ENCODE measurements at regions of chr20 and their contacts with region 1.

Region 1: GRCh38 chr20:51639206-51639832 is 96.8 kb upstream of the NFATC2 start:
- DNase-seq: peak; percentile 63 to 71
- ATAC-seq: peak; percentile 63 to 89 (median 87)
- H3K4me3 ChIP-seq: no peak overlapping the region
- H3K4me3 Mint-ChIP-seq: no peak overlapping the region
- H3K27ac ChIP-seq: no peak overlapping the region
- H3K27ac Mint-ChIP-seq: peak overlapping the region in 1 of 2 donors; percentile 55
- H3K4me1 ChIP-seq: peaks cover 6% of the 10 kb centered on the region
- H3K4me1 Mint-ChIP-seq: peaks cover 6 to 8% of the 10 kb centered on the region in 2 donors
- H3K27me3 ChIP-seq: no peaks in the 10 kb centered on the region
- H3K27me3 Mint-ChIP-seq: no peaks in the 10 kb centered on the region
- CTCF ChIP-seq: peak; percentile 90

Region 2: DNA sequence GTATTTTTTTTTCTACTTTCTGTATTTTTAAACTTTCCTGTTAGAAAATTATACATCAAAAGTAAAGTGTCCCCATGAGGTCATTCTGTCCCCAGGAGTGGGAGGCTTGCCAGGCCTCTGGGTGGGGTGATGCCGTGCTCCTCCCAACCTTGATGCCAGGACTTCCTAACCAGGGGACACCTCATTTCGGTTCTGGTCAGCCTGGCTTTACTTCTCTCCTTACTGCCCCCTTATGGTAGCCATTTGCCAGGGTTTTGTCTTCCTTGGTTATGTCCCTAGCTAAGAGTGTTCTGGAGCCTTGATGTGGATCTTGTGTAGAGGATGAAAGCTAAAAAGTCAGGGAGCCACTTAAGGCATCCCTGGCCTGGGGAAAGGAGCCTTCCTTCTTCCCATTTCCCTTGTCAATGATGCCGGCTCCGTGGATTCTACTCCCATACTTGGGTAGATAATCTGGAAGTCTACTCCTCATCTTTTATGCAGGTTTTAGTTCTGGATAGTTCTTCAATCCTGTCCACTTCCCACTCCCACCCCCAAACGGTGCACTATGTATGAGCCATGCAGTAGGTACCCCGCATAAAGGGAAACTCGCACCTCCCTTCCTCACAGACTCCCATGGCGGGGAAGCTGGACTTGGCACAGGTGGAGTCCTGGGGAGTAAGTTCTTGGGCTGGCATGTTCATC is 327.1 kb after region 1 on chr20:
- intact Hi-C with region 1: loop called (anchors 1 kb)
- DNase-seq: peak in 1 of 2 donors; percentile 30
- ATAC-seq: peak in 1 of 3 donors; percentile 65
- H3K4me3 ChIP-seq: no peak overlapping the region
- H3K4me3 Mint-ChIP-seq: no peak overlapping the region
- H3K27ac ChIP-seq: no peak overlapping the region
- H3K27ac Mint-ChIP-seq: no peak overlapping the region
- H3K4me1 ChIP-seq: peaks cover 3% of the 10 kb centered on the region
- H3K4me1 Mint-ChIP-seq: peaks cover 0 to 5% of the 10 kb centered on the region in 2 donors
- H3K27me3 ChIP-seq: no peaks in the 10 kb centered on the region
- H3K27me3 Mint-ChIP-seq: no peaks in the 10 kb centered on the region
- CTCF ChIP-seq: peak; percentile 58

Region 3: DNA sequence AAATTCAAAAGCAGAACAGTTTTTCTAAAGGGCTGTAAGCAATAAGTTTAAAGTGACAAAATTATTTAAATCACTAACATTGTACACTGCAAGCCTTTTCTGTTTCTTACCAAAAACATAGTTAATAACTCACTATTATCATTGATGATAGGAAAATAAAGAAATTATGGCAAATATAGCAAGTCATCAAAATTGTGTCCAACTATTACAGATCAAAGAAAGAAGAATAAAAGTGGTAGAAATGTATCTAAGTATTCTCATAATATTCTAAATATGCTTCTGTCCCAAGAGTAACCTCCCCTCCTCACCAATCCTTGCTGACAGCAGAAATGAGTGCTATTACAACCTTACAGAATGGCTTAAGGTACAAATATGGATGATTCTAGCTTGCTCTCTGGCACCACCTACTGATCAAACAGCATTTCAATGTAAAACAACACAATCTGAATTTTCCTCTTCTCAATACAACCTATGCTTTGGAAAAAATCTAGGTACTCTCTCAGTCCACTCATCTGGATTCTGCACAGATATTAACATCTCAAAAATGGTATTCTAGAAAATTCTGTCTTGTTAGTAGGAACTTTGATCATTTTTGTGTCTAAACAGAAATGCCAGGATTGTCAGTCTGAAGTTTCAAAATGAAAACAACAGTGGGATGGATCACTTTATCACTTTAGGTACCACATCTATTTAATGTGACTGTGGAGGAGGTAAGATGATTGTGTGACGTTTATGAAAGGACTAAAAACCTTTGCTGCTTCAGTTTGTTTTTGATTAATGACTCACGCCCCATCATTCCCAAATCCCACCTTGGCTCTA is 511.3 kb after region 1 on chr20:
- intact Hi-C with region 1: loop called (anchors 2 kb)
- DNase-seq: peak in 1 of 2 donors; percentile 64
- ATAC-seq: peak; percentile 50 to 68 (median 57)
- H3K4me3 ChIP-seq: no peak overlapping the region
- H3K4me3 Mint-ChIP-seq: no peak overlapping the region
- H3K27ac ChIP-seq: no peak overlapping the region
- H3K27ac Mint-ChIP-seq: no peak overlapping the region
- H3K4me1 ChIP-seq: no peaks in the 10 kb centered on the region
- H3K4me1 Mint-ChIP-seq: no peaks in the 10 kb centered on the region
- H3K27me3 ChIP-seq: no peaks in the 10 kb centered on the region
- H3K27me3 Mint-ChIP-seq: no peaks in the 10 kb centered on the region
- CTCF ChIP-seq: peak; percentile 89